ENCODE measurements at regions of chr1 and their contacts with region 1.

Region 1: GRCh38 chr1:156638189-156638985 is 3.5 kb upstream of the BCAN start:
- DNase-seq: no peak
- ATAC-seq: peak; percentile 12; the same call in 2 of the 3 replicates
- H3K4me3 ChIP-seq: no peak overlapping the region
- H3K27ac ChIP-seq: no peak overlapping the region
- H3K4me1 ChIP-seq: peaks cover 0 to 8% of the 10 kb centered on the region in 2 experiments; a peak in 2 of 5 replicates
- H3K27me3 ChIP-seq: peaks cover 7 to 10% of the 10 kb centered on the region in 2 experiments; a peak in 2 of 5 replicates
- CTCF ChIP-seq: no peak
- EP300 ChIP-seq: no peak
- POLR2A ChIP-seq: peak; percentile 58
- RAD21 ChIP-seq: no peak

Region 2: DNA sequence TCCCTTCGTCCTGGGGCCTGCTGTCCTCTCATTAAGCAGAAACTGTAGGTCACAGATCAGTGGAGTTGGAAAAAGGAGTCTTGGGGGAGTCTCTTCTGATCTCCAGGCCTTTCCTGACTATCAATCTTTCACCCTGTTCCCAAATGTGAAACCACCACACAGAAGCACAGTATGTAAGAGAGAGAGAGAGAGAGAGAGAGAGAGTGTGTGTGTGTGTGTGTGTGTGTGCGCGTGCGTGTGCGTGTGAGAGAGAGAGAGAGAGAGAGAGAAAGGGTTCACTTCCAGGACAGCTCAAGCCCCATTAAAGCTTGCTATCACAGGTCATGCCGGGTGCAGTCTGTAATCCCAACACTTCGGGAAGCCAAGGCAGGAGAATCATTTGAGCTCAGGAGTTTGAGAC is 60.3 kb before region 1 on chr1:
- CTCF ChIA-PET with region 1: no interaction called
- POLR2A ChIA-PET with region 1: no interaction called
- in situ Hi-C with region 1: no loop called
- intact Hi-C with region 1: no loop called
- DNase-seq: no peak
- ATAC-seq: no peak
- H3K4me3 ChIP-seq: no peak overlapping the region
- H3K27ac ChIP-seq: no peak overlapping the region
- H3K4me1 ChIP-seq: peaks cover 3 to 5% of the 10 kb centered on the region in 2 experiments; a peak in 3 of 5 replicates
- H3K27me3 ChIP-seq: no peaks in the 10 kb centered on the region
- CTCF ChIP-seq: no peak
- EP300 ChIP-seq: no peak
- POLR2A ChIP-seq: no peak
- RAD21 ChIP-seq: no peak

Region 3: GRCh38 chr1:156648951-156649350 is 10.6 kb after region 1 on chr1:
- CTCF ChIA-PET with region 1: no interaction called
- POLR2A ChIA-PET with region 1: interaction called, 12 read pairs
- in situ Hi-C with region 1: no loop called
- intact Hi-C with region 1: no loop called
- DNase-seq: peak in 1 of 4 experiments; percentile 32
- ATAC-seq: no peak
- H3K4me3 ChIP-seq: no peak overlapping the region
- H3K27ac ChIP-seq: no peak overlapping the region
- H3K4me1 ChIP-seq: peaks cover 0 to 28% of the 10 kb centered on the region in 2 experiments; a peak in 3 of 5 replicates
- H3K27me3 ChIP-seq: no peaks in the 10 kb centered on the region
- CTCF ChIP-seq: no peak; a peak in 1 of 6 replicates
- EP300 ChIP-seq: no peak
- POLR2A ChIP-seq: no peak
- RAD21 ChIP-seq: no peak

Measured in K562 (cell line).